BJ (cell line): ENCODE measurements at regions of chr7 and their contacts with region 1.

Region 1: GRCh38 chr7:106176414-106177299 is 64.5 kb upstream of the SYPL1 start:
- DNase-seq: no peak
- H3K4me3 ChIP-seq: no peak overlapping the region
- H3K27me3 ChIP-seq: no peaks in the 10 kb centered on the region
- CTCF ChIP-seq: peak; percentile 97

Region 2: DNA sequence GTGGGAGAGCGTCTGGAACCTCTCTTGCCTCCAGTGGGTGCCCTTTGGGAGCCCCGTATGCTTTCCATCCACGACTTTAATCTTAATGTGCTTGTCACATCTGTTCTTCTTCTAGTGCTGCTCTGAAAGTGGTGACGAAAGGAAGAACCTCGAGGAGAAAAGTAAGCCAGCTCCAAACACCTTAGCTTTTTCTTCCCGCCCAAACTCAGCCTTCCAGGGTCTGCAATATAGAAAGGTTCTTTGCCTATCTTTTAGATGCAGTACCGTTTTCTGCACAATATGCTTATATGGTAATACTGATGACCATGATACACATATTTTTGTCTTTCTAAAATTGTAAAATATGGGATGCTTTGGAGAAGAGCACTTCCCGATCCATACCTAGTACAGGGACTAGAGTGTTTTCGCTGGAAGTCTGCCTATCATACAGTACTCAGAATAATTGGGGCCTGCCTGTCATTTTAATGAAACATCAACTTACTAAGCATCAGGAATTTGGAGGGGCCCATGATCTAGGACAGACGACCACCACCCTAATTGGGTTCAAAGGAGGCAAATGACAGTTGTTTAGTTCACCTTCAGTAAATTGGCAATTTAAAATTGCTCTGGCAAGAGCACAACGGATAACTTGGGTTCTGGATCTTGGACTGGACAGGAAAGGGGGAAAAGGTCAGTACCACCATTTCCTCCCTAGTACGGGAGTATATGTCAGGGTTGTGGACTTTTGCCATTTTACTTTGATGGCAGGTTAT is 643.8 kb before region 1 on chr7:
- CTCF ChIA-PET with region 1: no interaction called
- POLR2A ChIA-PET with region 1: no interaction called
- DNase-seq: no peak
- H3K4me3 ChIP-seq: peak overlapping the region; percentile 86
- H3K27me3 ChIP-seq: no peaks in the 10 kb centered on the region
- CTCF ChIP-seq: no peak

Region 3: GRCh38 chr7:106367018-106367420 is 190.4 kb after region 1 on chr7:
- CTCF ChIA-PET with region 1: interaction called, 12 read pairs
- POLR2A ChIA-PET with region 1: no interaction called
- DNase-seq: no peak
- H3K4me3 ChIP-seq: no peak overlapping the region
- H3K27me3 ChIP-seq: no peaks in the 10 kb centered on the region
- CTCF ChIP-seq: peak; percentile 36

Region 4: GRCh38 chr7:106461993-106462859 is 285.6 kb after region 1 on chr7:
- CTCF ChIA-PET with region 1: interaction called, 202 read pairs
- POLR2A ChIA-PET with region 1: no interaction called
- DNase-seq: no peak
- H3K4me3 ChIP-seq: no peak overlapping the region
- H3K27me3 ChIP-seq: no peaks in the 10 kb centered on the region
- CTCF ChIP-seq: peak; percentile 48

Region 5: DNA sequence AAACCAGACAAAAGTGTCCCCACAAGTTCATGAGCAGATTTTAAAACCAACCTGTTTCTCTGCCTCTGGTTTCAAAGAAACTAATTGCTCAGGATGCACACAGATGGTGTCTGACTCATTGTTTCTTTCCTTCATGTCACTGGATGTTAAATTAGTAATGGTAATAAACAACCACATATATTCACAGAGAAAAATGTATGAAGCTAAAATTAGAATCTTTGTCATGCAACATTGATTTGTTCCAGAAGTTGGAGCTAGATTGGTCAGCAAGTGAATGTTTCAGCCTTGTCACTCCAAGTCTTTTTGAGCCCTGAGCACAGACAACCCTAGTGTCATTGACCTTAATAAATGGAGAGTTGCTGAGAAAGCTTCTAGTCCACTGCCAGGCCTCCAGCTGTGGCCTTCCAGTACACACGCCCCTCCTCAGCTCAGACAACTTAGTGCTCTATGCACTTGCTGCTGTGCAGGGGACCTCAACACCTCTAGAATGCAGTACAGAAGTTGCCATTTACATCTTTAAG is 308.4 kb after region 1 on chr7:
- CTCF ChIA-PET with region 1: interaction called, 14 read pairs
- POLR2A ChIA-PET with region 1: no interaction called
- DNase-seq: peak; percentile 91
- H3K4me3 ChIP-seq: no peak overlapping the region
- H3K27me3 ChIP-seq: no peaks in the 10 kb centered on the region
- CTCF ChIP-seq: no peak

Region 6: GRCh38 chr7:106659963-106660861 is 483.6 kb after region 1 on chr7:
- CTCF ChIA-PET with region 1: interaction called, 15 read pairs
- POLR2A ChIA-PET with region 1: no interaction called
- DNase-seq: no peak
- H3K4me3 ChIP-seq: peak overlapping the region; percentile 99
- H3K27me3 ChIP-seq: no peaks in the 10 kb centered on the region
- CTCF ChIP-seq: peak; percentile 80

Region 7: GRCh38 chr7:106736508-106737201 is 560.0 kb after region 1 on chr7:
- CTCF ChIA-PET with region 1: interaction called, 70 read pairs
- POLR2A ChIA-PET with region 1: no interaction called
- DNase-seq: no peak
- H3K4me3 ChIP-seq: no peak overlapping the region
- H3K27me3 ChIP-seq: no peaks in the 10 kb centered on the region
- CTCF ChIP-seq: peak; percentile 80